ENCODE measurements at regions of chr1 and their contacts with region 1.

Region 1: DNA sequence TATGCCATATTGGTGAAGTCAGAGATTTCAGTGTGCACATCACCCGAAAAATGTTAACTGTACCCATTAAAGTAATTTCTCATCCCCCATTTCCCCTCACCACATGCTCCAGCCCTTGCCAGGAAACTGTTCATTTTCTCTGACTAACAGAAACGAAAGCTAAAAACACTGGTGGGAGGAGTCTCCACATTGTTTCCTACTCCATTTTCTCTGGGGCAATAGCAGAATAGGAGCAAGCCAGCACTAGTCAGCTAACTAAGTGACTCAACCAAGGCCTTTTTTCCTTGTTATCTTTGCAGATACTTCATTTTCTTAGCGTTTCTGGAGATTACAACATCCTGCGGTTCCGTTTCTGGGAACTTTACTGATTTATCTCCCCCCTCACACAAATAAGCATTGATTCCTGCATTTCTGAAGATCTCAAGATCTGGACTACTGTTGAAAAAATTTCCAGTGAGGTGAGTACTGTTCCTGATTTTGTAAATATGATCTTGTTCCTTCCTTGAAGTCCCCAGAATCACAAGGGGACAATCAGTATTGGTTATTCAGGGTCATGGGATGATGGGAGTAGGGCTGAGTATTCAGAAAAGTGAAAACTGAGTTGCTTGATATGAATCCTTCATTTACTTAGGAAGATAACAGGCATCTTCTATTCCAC is at the start of gene IFI16:
- DNase-seq: no peak
- ATAC-seq: peak; percentile 61
- H3K4me3 Mint-ChIP-seq: peak within 1 kb of the TSS; percentile 91
- H3K27ac Mint-ChIP-seq: peak within 1 kb of the TSS; percentile 93
- H3K4me1 Mint-ChIP-seq: peaks cover 72% of the 10 kb centered on the region
- H3K27me3 Mint-ChIP-seq: no peaks in the 10 kb centered on the region
- CTCF ChIP-seq: no peak
- total RNA-seq, gene IFI16: 145 and 160 TPM in 2 replicates

Region 2: DNA sequence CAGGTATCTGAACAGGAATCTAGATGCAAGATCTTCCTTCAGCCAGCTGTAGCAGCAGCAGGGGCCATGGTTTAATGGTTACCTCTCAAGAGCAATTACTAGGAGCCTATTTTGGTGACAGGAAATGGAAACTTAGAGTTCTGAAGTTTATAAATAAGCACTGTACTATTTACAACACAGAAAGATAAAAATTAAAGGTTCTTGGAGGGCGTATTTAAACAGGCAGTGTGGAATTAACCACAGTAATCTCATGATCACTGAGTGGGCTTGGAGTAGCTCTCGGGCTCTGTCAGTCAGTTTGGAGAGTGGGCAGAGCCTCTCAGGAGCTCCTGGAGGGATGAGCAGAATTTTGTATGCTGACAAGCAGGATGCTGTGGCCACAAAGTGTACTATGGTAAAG is 1447.3 kb before region 1 on chr1:
- CTCF ChIA-PET with region 1: no interaction called
- POLR2A ChIA-PET with region 1: no interaction called
- intact Hi-C with region 1: loop called (anchors 10 kb)
- DNase-seq: no peak
- ATAC-seq: peak; percentile 29
- H3K4me3 Mint-ChIP-seq: peak overlapping the region; percentile 65
- H3K27ac Mint-ChIP-seq: peak overlapping the region; percentile 73
- H3K4me1 Mint-ChIP-seq: peaks cover 70% of the 10 kb centered on the region
- H3K27me3 Mint-ChIP-seq: no peaks in the 10 kb centered on the region
- CTCF ChIP-seq: no peak

Region 3: DNA sequence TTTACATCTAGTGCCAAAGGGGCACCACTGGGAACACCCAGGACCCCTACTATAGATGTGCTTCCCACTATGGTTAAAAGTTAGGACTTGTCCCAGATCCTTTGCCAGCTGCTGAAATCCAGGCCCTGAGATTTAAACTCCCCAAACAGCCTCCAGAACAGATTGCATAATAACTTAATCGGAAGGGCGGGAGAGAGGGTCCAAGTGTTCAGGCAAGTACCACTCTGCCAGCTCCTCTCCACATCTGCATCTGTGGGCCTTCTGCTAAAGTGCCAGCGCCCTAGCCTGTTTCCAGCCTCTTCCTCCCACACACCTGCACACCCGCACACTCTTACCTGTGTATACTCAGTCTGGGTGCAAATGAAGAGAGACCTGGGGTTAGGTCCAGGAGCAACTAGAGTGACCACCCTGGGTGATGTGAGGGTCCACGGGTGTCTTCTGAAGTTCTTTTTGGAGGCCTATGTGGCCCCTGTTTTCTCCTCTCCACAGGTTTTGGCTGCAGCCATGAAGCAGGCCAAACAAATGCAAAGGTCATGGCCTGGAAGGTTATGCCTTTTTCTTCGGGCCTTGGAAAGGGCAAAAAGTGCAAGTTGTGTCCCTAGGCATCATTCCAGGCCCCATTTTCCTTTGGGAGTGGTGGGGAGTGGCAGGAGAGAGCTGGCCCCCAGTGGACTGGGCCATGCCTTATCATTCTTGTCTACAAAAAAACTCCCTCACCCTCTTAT is 987.1 kb before region 1 on chr1:
- CTCF ChIA-PET with region 1: no interaction called
- POLR2A ChIA-PET with region 1: interaction called, 10 read pairs
- intact Hi-C with region 1: no loop called
- DNase-seq: no peak
- ATAC-seq: no peak
- H3K4me3 Mint-ChIP-seq: no peak overlapping the region
- H3K27ac Mint-ChIP-seq: no peak overlapping the region
- H3K4me1 Mint-ChIP-seq: no peaks in the 10 kb centered on the region
- H3K27me3 Mint-ChIP-seq: peaks cover 28% of the 10 kb centered on the region
- CTCF ChIP-seq: no peak

Region 4: DNA sequence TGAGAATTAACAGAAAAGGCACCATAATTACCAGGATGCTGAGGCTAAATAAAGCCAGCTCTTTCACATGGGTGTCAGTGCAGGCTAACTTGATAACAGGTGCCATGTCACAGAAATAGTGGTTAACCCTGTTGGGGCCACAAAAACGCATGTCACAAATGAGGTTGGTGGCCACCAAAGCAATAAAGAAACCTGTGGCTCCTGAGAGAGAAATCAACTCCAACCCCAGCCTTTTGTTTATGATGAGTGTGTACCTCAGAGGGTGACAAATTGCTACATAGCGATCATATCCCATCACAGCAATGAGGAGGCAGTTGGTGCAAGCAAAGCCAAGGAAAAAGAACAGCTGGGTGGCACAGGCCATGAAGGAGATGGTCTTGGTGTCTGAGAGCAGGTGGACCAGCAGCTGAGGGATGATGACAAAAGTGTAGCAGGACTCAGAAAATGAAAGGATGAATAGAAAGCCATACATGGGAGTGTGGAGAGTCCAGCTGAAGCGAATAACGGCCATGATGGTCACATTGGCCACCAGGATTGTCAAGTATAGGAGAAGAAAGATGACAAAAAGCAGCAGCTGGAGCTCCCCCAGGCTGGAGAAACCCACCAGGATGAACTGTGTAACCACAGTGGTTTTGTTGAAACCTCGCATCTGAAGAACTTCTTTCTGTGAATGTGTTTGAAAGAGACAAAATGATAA is 610.9 kb before region 1 on chr1 and contains the start of gene OR10T2:
- CTCF ChIA-PET with region 1: no interaction called
- POLR2A ChIA-PET with region 1: no interaction called
- intact Hi-C with region 1: loop called (anchors 10 kb)
- DNase-seq: no peak
- ATAC-seq: no peak
- H3K4me3 Mint-ChIP-seq: no peak within 1 kb of the TSS
- H3K27ac Mint-ChIP-seq: no peak within 1 kb of the TSS
- H3K4me1 Mint-ChIP-seq: peaks cover 12% of the 10 kb centered on the region
- H3K27me3 Mint-ChIP-seq: no peaks in the 10 kb centered on the region
- CTCF ChIP-seq: no peak
- total RNA-seq, gene OR10T2: not detected in 2 replicates

Region 5: DNA sequence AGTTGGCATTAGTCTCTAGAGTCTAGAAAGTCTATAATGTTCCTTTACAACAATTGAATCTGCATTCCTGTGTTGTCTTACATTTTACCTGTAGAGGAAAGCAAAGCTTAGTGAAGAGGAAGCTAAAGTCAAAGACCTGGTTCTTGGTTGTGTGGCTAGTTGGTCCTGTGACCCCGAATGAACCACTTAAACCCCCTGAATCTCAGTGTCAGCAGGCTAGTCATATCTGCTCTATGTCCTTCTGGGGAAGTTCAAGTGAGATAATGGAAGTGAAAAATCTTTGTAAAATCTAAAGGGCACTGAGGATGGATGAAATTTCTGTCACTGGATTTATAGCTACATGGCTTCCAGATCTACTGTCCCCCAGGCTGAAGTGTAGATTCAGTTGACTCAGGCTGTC is 90.8 kb after region 1 on chr1:
- CTCF ChIA-PET with region 1: no interaction called
- POLR2A ChIA-PET with region 1: no interaction called
- intact Hi-C with region 1: no loop called
- DNase-seq: no peak
- ATAC-seq: no peak
- H3K4me3 Mint-ChIP-seq: no peak overlapping the region
- H3K27ac Mint-ChIP-seq: no peak overlapping the region
- H3K4me1 Mint-ChIP-seq: no peaks in the 10 kb centered on the region
- H3K27me3 Mint-ChIP-seq: no peaks in the 10 kb centered on the region
- CTCF ChIP-seq: no peak

Region 6: DNA sequence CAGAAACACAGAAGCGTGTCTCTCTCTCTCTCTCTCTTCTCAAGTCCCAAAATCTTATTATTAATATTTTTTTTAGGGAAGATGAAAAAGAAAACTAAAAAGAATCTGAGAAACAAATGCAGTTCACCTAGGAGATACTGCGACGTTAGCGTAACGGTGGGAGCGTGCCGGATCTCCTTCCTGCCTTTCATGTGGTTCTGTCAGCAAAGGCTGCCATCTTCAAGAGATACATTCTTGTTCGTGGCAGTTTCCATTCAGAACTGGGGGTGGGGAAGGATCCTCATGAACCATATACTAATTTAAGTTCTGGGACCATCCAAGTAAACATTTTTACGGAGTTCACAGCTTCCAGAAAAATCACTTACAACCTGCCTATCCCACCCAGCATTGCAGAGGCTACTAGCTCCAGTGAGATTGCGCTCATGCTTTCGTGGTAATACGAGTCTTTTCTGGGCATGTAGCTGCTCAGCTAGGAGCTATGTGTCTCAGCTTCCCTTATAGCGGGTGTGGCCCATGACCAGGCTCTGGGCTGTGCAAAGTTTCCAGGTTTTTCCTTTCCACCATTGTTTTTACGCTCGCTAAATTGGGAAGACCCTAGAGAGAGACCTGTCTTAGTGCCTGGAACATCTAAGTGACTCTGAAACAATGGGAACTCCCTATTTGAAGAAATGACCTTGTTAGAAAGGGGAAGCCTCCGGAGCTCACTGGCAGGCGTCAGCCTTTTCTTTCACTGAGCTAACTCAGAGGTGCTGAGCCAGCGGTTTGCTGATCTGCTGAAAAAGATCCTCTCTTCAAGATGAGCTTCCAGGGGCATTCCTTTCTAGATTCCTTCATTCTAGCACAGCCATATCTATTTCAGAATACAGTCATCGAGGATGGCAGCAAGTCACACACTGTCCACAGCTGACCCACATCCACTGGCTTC is 1619.7 kb after region 1 on chr1:
- CTCF ChIA-PET with region 1: no interaction called
- POLR2A ChIA-PET with region 1: no interaction called
- intact Hi-C with region 1: loop called (anchors 10 kb)
- DNase-seq: no peak
- ATAC-seq: peak; percentile 33
- H3K4me3 Mint-ChIP-seq: peak overlapping the region; percentile 41
- H3K27ac Mint-ChIP-seq: peak overlapping the region; percentile 74
- H3K4me1 Mint-ChIP-seq: peaks cover 96% of the 10 kb centered on the region
- H3K27me3 Mint-ChIP-seq: no peaks in the 10 kb centered on the region
- CTCF ChIP-seq: no peak

Measured in activated B cell treated with CpG ODN at 0.5 μM for 24 hours (primary cell).